SK-N-SH (cell line): ENCODE measurements at regions of chr6 and their contacts with region 1.

Region 1: GRCh38 chr6:122947355-122947754 is 48.7 kb upstream of the CLVS2 start:
- DNase-seq: peak; percentile 36
- H3K4me3 ChIP-seq: no peak overlapping the region
- H3K27ac ChIP-seq: no peak overlapping the region
- H3K4me1 ChIP-seq: no peaks in the 10 kb centered on the region
- H3K27me3 ChIP-seq: no peaks in the 10 kb centered on the region
- CTCF ChIP-seq: no peak
- EP300 ChIP-seq: no peak
- RAD21 ChIP-seq: peak; percentile 72

Region 2: GRCh38 chr6:122931916-122932315 is 15.4 kb before region 1 on chr6:
- CTCF ChIA-PET with region 1: interaction called, 11 read pairs
- POLR2A ChIA-PET with region 1: no interaction called
- DNase-seq: no peak
- H3K4me3 ChIP-seq: no peak overlapping the region
- H3K27ac ChIP-seq: no peak overlapping the region
- H3K4me1 ChIP-seq: no peaks in the 10 kb centered on the region
- H3K27me3 ChIP-seq: no peaks in the 10 kb centered on the region
- CTCF ChIP-seq: no peak
- EP300 ChIP-seq: no peak
- RAD21 ChIP-seq: no peak

Region 3: GRCh38 chr6:123316733-123317323 is 369.5 kb after region 1 on chr6:
- CTCF ChIA-PET with region 1: interaction called, 45 read pairs
- POLR2A ChIA-PET with region 1: no interaction called
- DNase-seq: peak; percentile 0
- H3K4me3 ChIP-seq: no peak overlapping the region
- H3K27ac ChIP-seq: no peak overlapping the region
- H3K4me1 ChIP-seq: no peaks in the 10 kb centered on the region
- H3K27me3 ChIP-seq: no peaks in the 10 kb centered on the region
- CTCF ChIP-seq: peak; percentile 62
- EP300 ChIP-seq: no peak
- RAD21 ChIP-seq: peak; percentile 68